Heart right ventricle (tissue), 16 donors: ENCODE measurements at regions of chr12 and their contacts with region 1.

Region 1: DNA sequence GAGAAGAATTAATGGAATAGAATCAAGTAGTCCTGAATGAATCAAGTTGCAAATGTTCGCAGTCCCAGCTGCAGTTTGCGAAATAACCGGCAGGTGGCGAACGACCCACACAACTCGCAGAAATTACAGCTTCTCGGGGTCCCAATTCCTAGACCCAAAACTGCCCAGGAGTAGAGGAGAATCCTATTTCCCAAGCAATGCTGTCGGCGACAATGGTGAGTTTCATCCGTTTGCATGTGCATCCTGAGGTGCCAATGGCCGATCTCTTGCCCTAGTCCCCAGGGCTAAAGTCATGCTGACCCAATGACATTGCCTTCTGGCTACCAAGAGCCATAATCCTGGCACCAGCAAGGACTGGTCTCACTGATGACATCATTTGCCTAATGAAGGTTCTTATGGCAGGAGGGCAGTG is 8.5 kb upstream of the ASCL1 start:
- DNase-seq: peak in 1 of 2 donors; percentile 41
- ATAC-seq: no peak
- H3K4me3 ChIP-seq: no peak overlapping the region
- H3K27ac ChIP-seq: no peak overlapping the region
- H3K4me1 ChIP-seq: peaks cover 0 to 5% (median 0%) of the 10 kb centered on the region in 9 donors
- H3K27me3 ChIP-seq: peaks cover 0 to 78% (median 64%) of the 10 kb centered on the region in 7 donors
- CTCF ChIP-seq: peak; percentile 52 to 84 (median 76)

Region 2: DNA sequence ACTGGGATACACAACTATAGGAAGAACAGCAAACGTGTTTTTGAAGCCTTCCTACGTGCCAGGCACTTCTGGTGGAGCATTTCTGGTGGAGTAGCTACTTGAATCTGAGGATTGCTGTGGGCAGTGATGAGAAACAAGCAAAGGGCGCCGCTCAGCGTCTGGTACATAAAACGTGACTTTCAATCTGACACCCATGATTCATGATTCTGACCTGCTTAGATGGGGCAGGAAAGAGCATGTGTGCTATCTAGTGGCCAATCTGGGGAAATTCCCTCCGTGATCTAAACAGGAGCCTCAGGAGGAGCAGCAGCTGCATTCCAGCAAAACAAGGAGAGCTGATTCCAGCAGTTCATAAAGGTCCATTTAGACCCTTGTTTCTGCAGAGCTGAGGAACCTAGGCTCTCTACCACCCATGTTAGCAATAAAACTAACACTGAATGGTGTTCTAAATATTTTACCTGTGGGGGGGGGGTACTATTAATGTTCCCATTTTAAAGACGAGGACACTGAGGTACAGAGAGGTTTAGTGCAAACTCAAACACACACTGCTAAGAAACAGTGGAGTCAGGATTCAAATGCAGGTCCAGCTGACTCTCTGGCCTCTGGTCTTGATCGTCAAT is 69.7 kb before region 1 on chr12:
- intact Hi-C with region 1: no loop called
- DNase-seq: no peak
- ATAC-seq: peak in 4 of 8 donors; percentile 12 to 67 (median 40)
- H3K4me3 ChIP-seq: no peak overlapping the region
- H3K27ac ChIP-seq: no peak overlapping the region
- H3K4me1 ChIP-seq: peaks cover 0 to 6% (median 0%) of the 10 kb centered on the region in 9 donors
- H3K27me3 ChIP-seq: peaks cover 0 to 12% (median 8%) of the 10 kb centered on the region in 7 donors
- CTCF ChIP-seq: peak in 5 of 9 donors; percentile 12 to 41 (median 25)

Region 3: DNA sequence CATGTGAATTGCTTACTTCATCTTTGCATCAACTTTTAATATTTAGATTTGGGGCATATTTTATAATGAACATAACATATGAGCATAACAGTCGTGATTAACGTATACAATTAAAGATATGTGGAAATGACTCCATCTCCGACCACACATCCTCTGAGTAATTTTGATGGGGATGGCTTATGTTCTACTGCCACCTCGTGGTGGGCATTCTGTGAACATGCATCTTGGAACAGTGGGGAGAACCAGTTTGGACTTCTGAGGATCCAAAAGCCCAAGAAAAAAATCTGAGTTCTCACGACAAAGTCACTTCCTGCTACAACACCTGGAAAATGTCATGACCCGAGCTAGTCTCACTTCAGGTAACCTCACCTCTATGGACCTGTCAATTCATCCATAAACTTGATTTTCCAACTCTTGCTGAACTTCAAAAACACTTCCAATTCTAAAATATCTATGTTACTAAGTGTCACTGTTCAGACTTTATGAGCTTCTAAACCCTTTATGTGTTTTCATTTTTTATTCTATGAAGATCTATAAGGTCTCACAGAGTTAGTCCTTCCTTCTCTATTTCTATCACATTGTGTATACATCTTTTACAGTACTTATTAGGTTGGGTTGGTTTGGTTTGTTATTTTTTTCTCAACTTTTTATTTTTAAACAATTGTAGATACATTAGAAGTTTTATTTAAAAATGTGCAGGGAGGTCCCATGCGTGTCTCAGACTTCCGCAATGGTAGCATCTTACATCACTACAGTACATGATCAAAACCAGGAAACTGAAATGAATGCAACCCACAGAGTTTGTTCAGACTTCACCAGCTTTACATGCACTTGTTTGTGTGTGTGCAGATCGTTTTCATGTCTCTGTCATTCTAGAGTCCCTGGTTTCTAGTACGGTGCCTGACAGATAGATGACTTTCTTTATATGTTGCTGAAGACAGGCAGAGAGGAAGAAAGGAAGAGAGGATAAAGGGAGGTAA is 600.0 kb after region 1 on chr12:
- intact Hi-C with region 1: loop called (anchors 2 to 10 kb)
- DNase-seq: peak in 1 of 2 donors; percentile 51
- ATAC-seq: peak in 5 of 8 donors; percentile 38 to 73 (median 66)
- H3K4me3 ChIP-seq: no peak overlapping the region
- H3K27ac ChIP-seq: no peak overlapping the region
- H3K4me1 ChIP-seq: no peaks in the 10 kb centered on the region
- H3K27me3 ChIP-seq: peaks cover 0 to 27% (median 7%) of the 10 kb centered on the region in 7 donors
- CTCF ChIP-seq: peak; percentile 57 to 85 (median 78)

Region 4: DNA sequence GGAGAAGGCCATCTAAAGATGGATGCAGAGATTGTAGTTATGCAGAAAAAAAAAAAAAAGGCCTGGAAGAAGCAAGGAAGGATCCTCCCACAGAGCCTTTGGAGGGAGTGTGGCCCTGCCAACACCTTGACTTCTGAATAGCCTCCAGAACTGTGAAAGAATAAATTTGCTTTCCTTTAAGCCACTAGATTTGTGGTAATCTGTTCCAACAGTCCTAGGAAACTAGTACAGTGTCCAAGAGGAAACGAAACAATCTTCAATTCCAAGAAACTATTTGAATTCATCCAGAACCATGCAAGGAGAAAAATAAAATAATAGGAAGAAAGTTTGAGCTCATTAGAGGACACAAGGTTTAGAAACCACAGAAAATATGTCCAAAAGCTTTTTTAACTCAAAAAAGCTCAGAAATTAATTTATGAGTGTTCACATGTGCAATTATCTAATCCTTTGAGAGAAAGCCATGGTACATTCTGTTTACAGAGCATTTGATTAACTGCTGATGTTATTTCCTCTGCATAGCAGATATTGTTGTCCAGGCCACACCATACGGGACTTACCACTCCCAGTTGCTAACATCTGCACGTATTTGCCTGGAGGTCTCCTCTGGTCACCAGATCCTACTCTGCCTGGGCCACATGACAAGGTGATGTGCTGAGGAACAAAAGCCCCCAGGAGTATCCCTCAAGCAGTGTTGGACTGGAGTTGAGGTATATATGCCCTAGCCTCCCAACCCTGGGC is 608.1 kb after region 1 on chr12:
- intact Hi-C with region 1: loop called in 1 of 10 experiments (anchors 10 kb)
- DNase-seq: no peak
- ATAC-seq: peak in 5 of 8 donors; percentile 53 to 91 (median 74)
- H3K4me3 ChIP-seq: no peak overlapping the region
- H3K27ac ChIP-seq: peak overlapping the region in 3 of 10 donors; percentile 9 to 54 (median 28)
- H3K4me1 ChIP-seq: peaks cover 0 to 5% (median 0%) of the 10 kb centered on the region in 9 donors
- H3K27me3 ChIP-seq: peaks cover 0 to 10% (median 0%) of the 10 kb centered on the region in 7 donors
- CTCF ChIP-seq: no peak